A549 (cell line): ENCODE measurements at regions of chr19 and their contacts with region 1.

Region 1: DNA sequence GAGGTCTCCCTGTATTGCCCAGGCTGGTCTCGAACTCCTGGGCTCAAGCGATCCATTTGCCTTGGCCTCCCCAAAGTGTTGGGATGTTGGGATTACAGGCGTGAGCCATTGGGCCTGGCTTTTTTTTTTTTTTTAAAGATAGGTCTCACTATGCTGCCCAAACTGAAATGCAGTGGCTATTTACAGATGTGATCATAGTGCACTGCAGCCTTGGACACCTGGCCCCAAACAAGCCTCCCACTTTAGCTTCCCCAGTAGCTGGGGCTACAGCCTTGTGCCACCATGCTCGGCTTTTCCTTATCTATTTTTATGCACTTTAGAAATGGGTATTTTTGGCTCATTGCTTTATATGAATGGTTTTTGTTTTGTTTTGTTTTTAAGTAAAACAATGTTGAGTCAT is 37.4 kb downstream of the LSM14A start:
- DNase-seq: no peak
- ATAC-seq: no peak
- H3K4me3 ChIP-seq: no peak overlapping the region
- H3K27ac ChIP-seq: no peak overlapping the region
- H3K4me1 ChIP-seq: no peaks in the 10 kb centered on the region
- CTCF ChIP-seq: no peak
- EP300 ChIP-seq: no peak
- POLR2A ChIP-seq: no peak
- RAD21 ChIP-seq: no peak

Region 2: GRCh38 chr19:34193439-34193838 is 16.3 kb before region 1 on chr19:
- CTCF ChIA-PET with region 1: interaction called, 28 read pairs
- POLR2A ChIA-PET with region 1: no interaction called
- DNase-seq: no peak
- ATAC-seq: no peak
- H3K4me3 ChIP-seq: no peak overlapping the region
- H3K27ac ChIP-seq: no peak overlapping the region
- H3K4me1 ChIP-seq: peaks cover 40% of the 10 kb centered on the region; the same call in 2 of the 3 replicates
- CTCF ChIP-seq: no peak
- EP300 ChIP-seq: no peak
- POLR2A ChIP-seq: no peak
- RAD21 ChIP-seq: no peak

Region 3: GRCh38 chr19:34353546-34353945 is 143.8 kb after region 1 on chr19:
- CTCF ChIA-PET with region 1: no interaction called
- POLR2A ChIA-PET with region 1: no interaction called
- DNase-seq: no peak
- ATAC-seq: no peak
- H3K4me3 ChIP-seq: no peak overlapping the region
- H3K27ac ChIP-seq: no peak overlapping the region
- H3K4me1 ChIP-seq: peaks cover 9% of the 10 kb centered on the region
- CTCF ChIP-seq: no peak
- EP300 ChIP-seq: no peak
- POLR2A ChIP-seq: no peak
- RAD21 ChIP-seq: no peak